ENCODE measurements at regions of chr14 and their contacts with region 1.

Region 1: GRCh38 chr14:22986508-22987054 is 4.2 kb upstream of the AJUBA start:
- DNase-seq: peak; percentile 87
- H3K4me3 Mint-ChIP-seq: no peak overlapping the region
- H3K27ac Mint-ChIP-seq: no peak overlapping the region
- H3K4me1 Mint-ChIP-seq: peaks cover 6% of the 10 kb centered on the region
- H3K27me3 Mint-ChIP-seq: no peaks in the 10 kb centered on the region
- CTCF ChIP-seq: peak; percentile 75

Region 2: GRCh38 chr14:22386924-22387775 is 599.4 kb before region 1 on chr14:
- CTCF ChIA-PET with region 1: no interaction called
- POLR2A ChIA-PET with region 1: no interaction called
- intact Hi-C with region 1: loop called (anchors 5 kb)
- DNase-seq: peak; percentile 79
- H3K4me3 Mint-ChIP-seq: no peak overlapping the region
- H3K27ac Mint-ChIP-seq: no peak overlapping the region
- H3K4me1 Mint-ChIP-seq: peaks cover 27% of the 10 kb centered on the region
- H3K27me3 Mint-ChIP-seq: no peaks in the 10 kb centered on the region
- CTCF ChIP-seq: peak; percentile 72

Region 3: DNA sequence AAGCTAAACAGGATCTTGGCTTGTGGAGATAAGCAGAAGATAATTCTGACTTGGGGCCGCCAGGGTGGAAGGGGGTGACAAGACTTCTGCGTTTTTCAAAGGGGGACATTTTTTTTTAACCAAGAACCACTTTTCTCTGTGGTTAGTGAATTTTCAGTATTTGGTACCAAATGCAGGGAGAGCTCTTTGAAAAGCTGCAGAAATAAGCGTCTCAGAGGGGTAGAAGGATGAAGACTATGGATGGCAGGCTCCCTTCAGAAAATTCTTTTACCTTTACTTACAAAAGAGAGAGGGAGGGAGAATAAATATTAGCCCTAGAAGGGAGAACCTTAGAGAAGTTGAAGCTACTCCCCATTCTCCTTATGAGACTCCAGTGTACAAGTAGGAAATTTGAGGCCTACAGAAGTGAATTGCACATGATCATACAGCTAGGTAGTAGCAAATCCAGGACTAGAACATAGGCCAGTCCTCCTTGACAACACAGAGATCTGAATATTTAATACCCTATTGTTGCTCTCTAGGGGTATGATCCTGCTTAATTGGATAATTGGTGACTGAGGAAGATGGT is 156.1 kb before region 1 on chr14:
- CTCF ChIA-PET with region 1: no interaction called
- POLR2A ChIA-PET with region 1: no interaction called
- intact Hi-C with region 1: no loop called
- DNase-seq: no peak
- H3K4me3 Mint-ChIP-seq: peak overlapping the region; percentile 95
- H3K27ac Mint-ChIP-seq: peak overlapping the region; percentile 76
- H3K4me1 Mint-ChIP-seq: peaks cover 12% of the 10 kb centered on the region
- H3K27me3 Mint-ChIP-seq: no peaks in the 10 kb centered on the region
- CTCF ChIP-seq: no peak

Region 4: GRCh38 chr14:22918804-22919600 is 67.6 kb before region 1 on chr14 and contains the start of gene RBM23:
- CTCF ChIA-PET with region 1: interaction called, 8 read pairs
- POLR2A ChIA-PET with region 1: interaction called, 16 read pairs
- intact Hi-C with region 1: no loop called
- DNase-seq: peak; percentile 100
- H3K4me3 Mint-ChIP-seq: peak within 1 kb of the TSS; percentile 87
- H3K27ac Mint-ChIP-seq: peak within 1 kb of the TSS; percentile 100
- H3K4me1 Mint-ChIP-seq: peaks cover 31% of the 10 kb centered on the region
- H3K27me3 Mint-ChIP-seq: no peaks in the 10 kb centered on the region
- CTCF ChIP-seq: no peak
- total RNA-seq, gene RBM23: 57.6 and 60.6 TPM in 2 replicates

Region 5: GRCh38 chr14:22973217-22974032 is 13.2 kb before region 1 on chr14:
- CTCF ChIA-PET with region 1: interaction called, 331 read pairs
- POLR2A ChIA-PET with region 1: interaction called, 53 read pairs
- intact Hi-C with region 1: loop called (anchors 1 kb)
- DNase-seq: peak; percentile 78
- H3K4me3 Mint-ChIP-seq: peak overlapping the region; percentile 50
- H3K27ac Mint-ChIP-seq: peak overlapping the region; percentile 51
- H3K4me1 Mint-ChIP-seq: peaks cover 51% of the 10 kb centered on the region
- H3K27me3 Mint-ChIP-seq: no peaks in the 10 kb centered on the region
- CTCF ChIP-seq: peak; percentile 65

Region 6: DNA sequence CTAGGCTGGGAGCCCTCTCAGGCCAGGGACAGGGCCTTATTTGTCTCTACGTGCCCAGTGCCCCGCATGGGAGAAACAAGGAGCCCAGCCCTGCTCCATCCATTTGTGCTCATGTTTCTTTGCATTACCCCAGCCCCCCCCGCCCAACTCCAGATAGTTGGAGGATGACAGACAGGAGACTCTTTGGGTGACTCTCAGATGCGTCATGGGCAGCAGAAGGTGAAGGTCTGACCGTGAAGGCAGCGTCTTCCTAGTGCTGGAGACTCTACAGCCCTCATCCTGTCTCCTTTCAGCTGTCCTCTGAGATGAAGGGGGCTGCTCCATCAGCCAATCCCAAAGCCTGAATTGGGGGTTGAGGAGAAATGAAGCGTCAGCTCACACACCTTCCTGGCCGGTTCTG is 55.1 kb after region 1 on chr14:
- CTCF ChIA-PET with region 1: interaction called, 12 read pairs
- POLR2A ChIA-PET with region 1: no interaction called
- intact Hi-C with region 1: no loop called
- DNase-seq: no peak
- H3K4me3 Mint-ChIP-seq: no peak overlapping the region
- H3K27ac Mint-ChIP-seq: no peak overlapping the region
- H3K4me1 Mint-ChIP-seq: no peaks in the 10 kb centered on the region
- H3K27me3 Mint-ChIP-seq: no peaks in the 10 kb centered on the region
- CTCF ChIP-seq: no peak

Region 7: DNA sequence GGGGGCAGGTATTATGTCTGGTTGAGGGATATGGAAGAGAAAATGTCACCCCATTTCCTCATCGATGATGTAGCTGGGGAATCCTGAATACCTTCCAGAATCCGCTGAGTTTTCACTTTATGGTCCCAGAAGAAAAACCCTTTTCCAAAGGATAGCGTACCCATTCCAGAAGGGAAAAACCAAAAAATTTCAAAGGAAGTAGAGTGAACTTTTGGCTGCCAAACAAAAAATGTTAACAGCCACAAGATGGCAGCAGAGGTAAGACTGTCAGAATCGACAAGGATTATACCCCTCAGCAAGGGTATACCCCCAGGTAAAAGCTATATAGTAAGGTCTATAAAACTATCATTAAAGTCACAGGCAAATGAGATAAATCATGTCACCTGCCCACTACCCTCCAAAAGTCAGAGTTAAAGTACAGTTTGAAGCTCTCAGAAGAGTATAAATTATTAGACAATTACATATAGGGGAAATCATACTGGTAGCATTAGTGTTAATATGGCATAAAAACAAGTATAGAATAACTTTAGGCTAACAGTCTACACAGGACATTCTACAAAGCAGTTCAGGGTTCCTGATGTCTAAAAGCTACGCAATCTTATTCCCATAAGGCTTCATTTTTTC is 90.3 kb after region 1 on chr14:
- CTCF ChIA-PET with region 1: interaction called, 20 read pairs
- POLR2A ChIA-PET with region 1: interaction called, 12 read pairs
- intact Hi-C with region 1: no loop called
- DNase-seq: peak; percentile 48
- H3K4me3 Mint-ChIP-seq: no peak overlapping the region
- H3K27ac Mint-ChIP-seq: no peak overlapping the region
- H3K4me1 Mint-ChIP-seq: peaks cover 30% of the 10 kb centered on the region
- H3K27me3 Mint-ChIP-seq: no peaks in the 10 kb centered on the region
- CTCF ChIP-seq: peak; percentile 55

Measured in MCF 10A (cell line).